CD8-positive, alpha-beta T cell (primary cell): ENCODE measurements at regions of chr3 and their contacts with region 1.

Region 1: GRCh38 chr3:69051756-69052471 is at the start of gene TMF1:
- DNase-seq: peak; percentile 94 to 100 (median 98)
- ATAC-seq: peak; percentile 86
- H3K4me3 ChIP-seq: peak within 1 kb of the TSS; percentile 82 to 84
- H3K4me3 Mint-ChIP-seq: peak within 1 kb of the TSS; percentile 98
- H3K27ac ChIP-seq: peak within 1 kb of the TSS; percentile 93 to 97
- H3K27ac Mint-ChIP-seq: peak within 1 kb of the TSS; percentile 99
- H3K4me1 ChIP-seq: peaks cover 31% of the 10 kb centered on the region
- H3K4me1 Mint-ChIP-seq: peaks cover 48% of the 10 kb centered on the region
- H3K27me3 ChIP-seq: no peaks in the 10 kb centered on the region
- H3K27me3 Mint-ChIP-seq: no peaks in the 10 kb centered on the region
- CTCF ChIP-seq: no peak
- total RNA-seq, gene TMF1: 97.9 to 103 TPM

Region 2: DNA sequence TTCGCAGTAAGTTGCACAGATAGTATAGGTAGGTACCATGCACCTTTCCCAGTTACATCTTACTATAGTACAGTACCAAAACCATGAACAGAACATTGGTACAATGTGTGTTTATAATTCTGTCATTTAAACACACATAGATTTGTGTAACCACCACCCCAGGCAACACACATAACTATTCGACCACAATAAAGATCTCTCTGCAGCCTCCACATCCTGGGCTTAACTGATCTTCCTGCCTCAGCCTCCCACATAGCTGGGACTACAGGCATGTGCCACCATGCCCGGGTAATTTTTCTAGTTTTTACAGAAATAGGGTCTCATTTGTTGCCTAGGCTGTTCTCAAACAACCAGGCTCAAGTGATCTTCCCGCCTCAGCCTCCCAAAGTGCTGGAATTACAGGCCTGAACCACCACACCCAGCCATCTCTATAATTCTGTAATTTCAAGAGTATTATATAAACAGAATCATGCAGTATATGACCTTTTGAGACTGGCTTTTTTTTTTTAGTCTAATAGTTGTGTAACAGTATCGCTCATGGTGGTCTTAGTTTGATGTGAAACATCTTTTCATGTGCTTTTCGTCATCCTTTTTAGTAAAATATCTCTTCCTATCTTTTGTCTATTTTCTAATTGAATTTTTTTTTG is 13.5 kb after region 1 on chr3:
- CTCF ChIA-PET with region 1: interaction called, 3 read pairs
- POLR2A ChIA-PET with region 1: interaction called, 31 read pairs
- intact Hi-C with region 1: no loop called
- DNase-seq: peak in 1 of 9 experiments; percentile 55
- ATAC-seq: peak; percentile 62
- H3K4me3 ChIP-seq: no peak overlapping the region
- H3K4me3 Mint-ChIP-seq: no peak overlapping the region
- H3K27ac ChIP-seq: peak overlapping the region in 1 of 2 experiments; percentile 42
- H3K27ac Mint-ChIP-seq: peak overlapping the region; percentile 87
- H3K4me1 ChIP-seq: peaks cover 31% of the 10 kb centered on the region
- H3K4me1 Mint-ChIP-seq: peaks cover 36% of the 10 kb centered on the region
- H3K27me3 ChIP-seq: no peaks in the 10 kb centered on the region
- H3K27me3 Mint-ChIP-seq: no peaks in the 10 kb centered on the region
- CTCF ChIP-seq: no peak

Region 3: DNA sequence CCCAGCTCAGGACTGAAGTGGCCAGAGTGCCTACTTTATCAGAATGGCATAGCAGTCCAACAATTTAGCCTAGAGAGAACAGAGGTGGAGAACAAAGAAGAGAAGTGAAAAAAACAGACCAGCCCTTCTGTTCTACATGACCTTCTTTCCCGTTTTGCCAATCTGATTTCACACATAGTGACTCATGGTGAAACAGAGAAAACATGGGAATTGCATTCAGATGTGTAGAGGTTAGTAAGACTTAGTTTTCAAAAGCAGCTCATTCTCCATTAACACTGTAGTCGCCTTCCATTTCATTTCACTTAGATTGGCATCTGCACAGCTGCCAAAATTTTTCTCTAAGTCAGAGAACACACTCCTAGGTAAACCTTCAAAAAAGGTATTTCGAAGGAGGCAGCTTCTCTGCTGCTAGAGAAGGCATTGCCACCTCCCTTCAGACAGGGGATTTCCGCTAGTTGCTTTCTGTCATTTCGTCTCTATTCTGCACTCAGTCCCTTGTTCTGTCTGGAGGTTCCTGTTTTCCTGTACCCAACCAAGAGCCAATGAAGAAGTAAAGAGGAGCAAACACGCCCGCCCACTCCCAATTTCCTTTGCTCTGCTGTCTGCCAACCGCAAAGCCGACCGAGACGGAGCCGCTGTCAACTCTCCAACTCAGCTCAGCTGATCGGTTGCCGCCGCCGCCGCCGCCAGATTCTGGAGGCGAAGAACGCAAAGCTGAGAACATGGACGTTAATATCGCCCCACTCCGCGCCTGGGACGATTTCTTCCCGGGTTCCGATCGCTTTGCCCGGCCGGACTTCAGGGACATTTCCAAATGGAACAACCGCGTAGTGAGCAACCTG is 32.6 kb after region 1 on chr3 and contains the start of gene ARL6IP5:
- CTCF ChIA-PET with region 1: interaction called, 5 read pairs
- POLR2A ChIA-PET with region 1: interaction called, 40 read pairs
- intact Hi-C with region 1: loop called (anchors 1 kb)
- DNase-seq: peak; percentile 76 to 96 (median 92)
- ATAC-seq: peak; percentile 68
- H3K4me3 ChIP-seq: peak within 1 kb of the TSS; percentile 93 to 96
- H3K4me3 Mint-ChIP-seq: peak within 1 kb of the TSS; percentile 96
- H3K27ac ChIP-seq: peak within 1 kb of the TSS; percentile 56 to 85
- H3K27ac Mint-ChIP-seq: peak within 1 kb of the TSS; percentile 98
- H3K4me1 ChIP-seq: peaks cover 60% of the 10 kb centered on the region
- H3K4me1 Mint-ChIP-seq: peaks cover 70% of the 10 kb centered on the region
- H3K27me3 ChIP-seq: no peaks in the 10 kb centered on the region
- H3K27me3 Mint-ChIP-seq: no peaks in the 10 kb centered on the region
- CTCF ChIP-seq: no peak
- total RNA-seq, gene ARL6IP5: 44.8 to 52.9 TPM

Region 4: GRCh38 chr3:69120879-69121464 is 69.1 kb after region 1 on chr3:
- CTCF ChIA-PET with region 1: interaction called, 9 read pairs
- POLR2A ChIA-PET with region 1: no interaction called
- intact Hi-C with region 1: loop called in 1 of 2 experiments (anchors 2 kb)
- DNase-seq: peak; percentile 63 to 88 (median 82)
- ATAC-seq: peak; percentile 92
- H3K4me3 ChIP-seq: no peak overlapping the region
- H3K4me3 Mint-ChIP-seq: no peak overlapping the region
- H3K27ac ChIP-seq: no peak overlapping the region
- H3K27ac Mint-ChIP-seq: no peak overlapping the region
- H3K4me1 ChIP-seq: no peaks in the 10 kb centered on the region
- H3K4me1 Mint-ChIP-seq: peaks cover 5% of the 10 kb centered on the region
- H3K27me3 ChIP-seq: no peaks in the 10 kb centered on the region
- H3K27me3 Mint-ChIP-seq: no peaks in the 10 kb centered on the region
- CTCF ChIP-seq: peak; percentile 96

Region 5: DNA sequence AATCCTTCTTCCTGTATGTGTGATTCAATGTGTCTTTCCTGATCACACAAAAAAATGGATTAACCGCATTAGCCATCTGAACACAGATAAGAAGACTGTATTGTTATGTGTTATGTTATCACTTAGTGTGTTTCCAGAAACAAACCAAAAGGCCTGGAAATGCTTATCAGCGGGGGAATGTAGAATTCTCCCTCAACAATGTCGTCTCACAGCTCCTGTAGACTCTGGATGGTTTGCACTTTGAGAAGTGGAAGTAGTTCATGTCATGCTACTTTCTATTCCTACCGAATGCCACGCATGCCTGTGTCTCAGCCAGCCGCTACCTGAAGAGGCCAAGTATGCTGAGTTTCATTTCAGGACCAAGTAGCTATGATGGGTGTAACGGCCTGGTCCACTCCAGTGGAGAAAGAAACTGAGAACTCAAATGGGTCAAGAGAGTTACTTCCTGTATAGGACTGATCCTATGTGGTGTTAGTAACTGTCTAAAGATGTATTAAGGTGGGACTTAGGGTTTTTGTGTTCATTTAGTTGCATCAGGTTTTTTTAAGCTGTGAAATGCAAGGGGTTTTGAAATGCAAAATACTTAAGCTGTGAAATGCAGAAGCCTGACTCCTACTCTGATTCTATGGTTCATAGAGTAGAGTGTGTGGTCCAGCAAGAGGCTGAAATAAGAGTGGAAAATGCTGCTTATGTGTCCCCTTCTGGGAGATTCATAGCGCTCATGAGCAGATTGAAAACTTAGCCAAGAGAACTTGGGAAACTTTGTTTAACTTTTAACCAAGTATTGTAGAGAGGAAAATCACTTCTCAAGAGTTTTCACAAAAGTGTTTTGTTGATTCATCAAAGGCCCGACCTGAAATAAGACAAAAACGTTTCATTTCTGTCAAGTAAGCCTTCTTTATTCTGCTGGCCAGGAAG is 189.0 kb after region 1 on chr3:
- CTCF ChIA-PET with region 1: no interaction called
- POLR2A ChIA-PET with region 1: no interaction called
- intact Hi-C with region 1: no loop called
- DNase-seq: no peak
- ATAC-seq: no peak
- H3K4me3 ChIP-seq: no peak overlapping the region
- H3K4me3 Mint-ChIP-seq: no peak overlapping the region
- H3K27ac ChIP-seq: no peak overlapping the region
- H3K27ac Mint-ChIP-seq: no peak overlapping the region
- H3K4me1 ChIP-seq: peaks cover 9% of the 10 kb centered on the region
- H3K4me1 Mint-ChIP-seq: peaks cover 14% of the 10 kb centered on the region
- H3K27me3 ChIP-seq: no peaks in the 10 kb centered on the region
- H3K27me3 Mint-ChIP-seq: no peaks in the 10 kb centered on the region
- CTCF ChIP-seq: no peak